ENCODE measurements at regions of chr11 and their contacts with region 1.

Region 1: DNA sequence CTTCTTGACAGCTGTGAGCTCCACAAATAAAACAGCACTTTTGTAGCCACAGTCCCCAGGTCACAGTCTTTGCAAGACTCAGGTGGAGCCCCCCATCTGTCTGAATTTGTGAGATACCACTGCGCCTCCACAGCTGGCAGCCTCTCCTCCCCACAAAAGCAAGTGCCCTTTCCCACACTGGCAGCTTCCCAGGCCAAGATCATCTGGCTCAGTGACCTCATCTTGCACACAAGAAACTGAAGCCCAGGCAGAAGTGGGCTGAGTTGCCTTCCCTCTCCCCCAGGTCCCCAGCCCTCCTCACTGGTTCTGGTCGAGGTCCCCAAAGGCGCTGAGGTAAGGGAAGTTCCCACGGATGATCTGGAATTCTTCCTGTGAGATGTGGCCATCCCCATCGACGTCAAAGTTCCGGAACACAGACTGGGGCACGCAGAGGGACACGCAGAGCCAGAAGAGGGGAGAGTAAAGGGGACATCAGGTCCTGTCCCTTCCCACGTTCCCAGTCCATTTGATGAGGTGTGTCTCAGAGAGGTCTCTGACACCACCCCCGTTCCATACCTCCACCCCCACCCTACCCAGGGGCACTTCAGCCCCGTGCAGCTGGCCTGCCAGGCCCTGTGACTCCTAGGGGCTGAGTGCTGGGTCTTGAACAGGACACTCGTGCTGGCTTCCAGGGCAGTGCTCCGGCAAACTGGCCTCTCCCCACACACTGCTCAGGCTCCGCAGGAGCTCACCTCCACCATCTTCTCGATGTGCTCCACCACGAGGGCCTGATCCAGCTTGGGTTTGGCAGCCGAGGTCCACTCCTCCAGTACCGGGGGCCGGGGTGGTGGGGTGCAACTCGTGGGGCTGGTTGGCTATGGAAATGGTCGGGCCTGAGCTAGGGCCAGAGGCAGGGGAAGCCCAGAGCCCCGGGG is 8.9 kb downstream of the RASGRP2 start:
- DNase-seq: no peak
- H3K4me3 ChIP-seq: no peak overlapping the region
- H3K27ac ChIP-seq: no peak overlapping the region
- H3K4me1 ChIP-seq: peaks cover 0 to 19% (median 10%) of the 10 kb centered on the region in 4 experiments; a peak in 6 of 7 replicates
- H3K27me3 ChIP-seq: no peaks in the 10 kb centered on the region; a peak in 2 of 7 replicates
- CTCF ChIP-seq: no peak
- EP300 ChIP-seq: no peak
- POLR2A ChIP-seq: no peak
- RAD21 ChIP-seq: no peak

Region 2: GRCh38 chr11:64750361-64751054 is 15.4 kb after region 1 on chr11:
- CTCF ChIA-PET with region 1: interaction called, 376 read pairs
- POLR2A ChIA-PET with region 1: interaction called, 1,087 read pairs
- DNase-seq: no peak
- H3K4me3 ChIP-seq: no peak overlapping the region
- H3K27ac ChIP-seq: no peak overlapping the region
- H3K4me1 ChIP-seq: peaks cover 0 to 7% (median 5%) of the 10 kb centered on the region in 4 experiments; a peak in 4 of 7 replicates
- H3K27me3 ChIP-seq: no peaks in the 10 kb centered on the region
- CTCF ChIP-seq: peak in 1 of 3 experiments; percentile 17; a peak in 1 of 4 replicates
- EP300 ChIP-seq: no peak
- POLR2A ChIP-seq: no peak
- RAD21 ChIP-seq: 0 out of 4 replicates have a peak, but pooled peaks of 1 of the 2 experiments have one; percentile 5

Measured in H1 (cell line).